ENCODE measurements at regions of chr2 and their contacts with region 1.

Region 1: GRCh38 chr2:84701895-84702294 is 179.0 kb downstream of the TRABD2A start:
- DNase-seq: no peak
- H3K4me3 ChIP-seq: no peak overlapping the region
- H3K27ac ChIP-seq: no peak overlapping the region
- H3K4me1 ChIP-seq: no peaks in the 10 kb centered on the region
- H3K27me3 ChIP-seq: no peaks in the 10 kb centered on the region
- CTCF ChIP-seq: no peak

Region 2: GRCh38 chr2:84283506-84283905 is 418.4 kb before region 1 on chr2:
- intact Hi-C with region 1: no loop called
- DNase-seq: no peak
- H3K4me3 ChIP-seq: no peak overlapping the region
- H3K27ac ChIP-seq: no peak overlapping the region
- H3K4me1 ChIP-seq: no peaks in the 10 kb centered on the region
- H3K27me3 ChIP-seq: no peaks in the 10 kb centered on the region
- CTCF ChIP-seq: no peak

Region 3: DNA sequence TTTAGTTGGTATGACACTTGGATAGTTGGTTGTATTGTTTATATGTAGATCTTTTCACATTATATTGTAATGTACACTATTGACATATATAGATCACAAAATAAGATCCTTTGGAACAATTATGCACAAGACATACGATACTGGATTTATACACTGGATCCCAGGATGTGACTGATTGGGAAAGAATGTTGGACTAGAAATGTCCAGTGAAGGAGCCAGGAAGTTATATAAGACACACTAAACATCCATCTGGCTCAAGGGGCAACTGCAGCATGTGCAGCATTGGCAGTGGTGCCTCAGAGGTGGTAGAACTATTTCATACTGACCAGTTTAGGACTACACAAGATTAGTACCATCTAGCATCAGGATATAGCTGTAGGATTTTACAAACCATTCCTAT is 74.1 kb after region 1 on chr2:
- intact Hi-C with region 1: loop called (anchors 5 kb)
- DNase-seq: no peak
- H3K4me3 ChIP-seq: no peak overlapping the region
- H3K27ac ChIP-seq: no peak overlapping the region
- H3K4me1 ChIP-seq: no peaks in the 10 kb centered on the region
- H3K27me3 ChIP-seq: no peaks in the 10 kb centered on the region
- CTCF ChIP-seq: no peak

Region 4: DNA sequence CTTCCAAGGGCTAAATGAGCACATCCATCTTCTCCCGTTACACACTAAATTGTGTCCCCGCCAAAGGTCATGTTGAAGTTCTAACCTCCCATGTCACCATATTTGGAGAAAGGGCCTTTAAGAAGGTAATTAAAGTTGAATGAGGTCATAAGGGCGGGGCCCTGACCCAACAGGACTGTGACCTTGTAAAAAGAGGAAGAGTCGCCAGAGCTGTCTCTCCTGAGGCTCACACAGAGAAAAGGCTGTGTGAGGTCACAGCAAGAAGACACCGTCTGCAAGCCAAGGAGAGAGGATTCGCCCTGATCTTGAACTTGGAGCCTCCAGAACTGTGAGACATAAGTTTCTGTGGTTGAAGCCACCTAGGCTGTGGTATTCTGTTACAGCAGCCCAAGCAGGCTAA is 154.9 kb after region 1 on chr2:
- intact Hi-C with region 1: no loop called
- DNase-seq: no peak
- H3K4me3 ChIP-seq: no peak overlapping the region
- H3K27ac ChIP-seq: no peak overlapping the region
- H3K4me1 ChIP-seq: no peaks in the 10 kb centered on the region
- H3K27me3 ChIP-seq: no peaks in the 10 kb centered on the region
- CTCF ChIP-seq: no peak

Region 5: GRCh38 chr2:85066874-85067351 is 365.0 kb after region 1 on chr2:
- intact Hi-C with region 1: no loop called
- DNase-seq: peak; percentile 64
- H3K4me3 ChIP-seq: peak overlapping the region; percentile 5
- H3K27ac ChIP-seq: no peak overlapping the region
- H3K4me1 ChIP-seq: no peaks in the 10 kb centered on the region
- H3K27me3 ChIP-seq: no peaks in the 10 kb centered on the region
- CTCF ChIP-seq: peak; percentile 71

Measured in colonic mucosa (tissue), 4 donors.